ENCODE measurements at regions of chr12 and their contacts with region 1.

Region 1: GRCh38 chr12:45388545-45388944 is 172.7 kb downstream of the ANO6 start:
- DNase-seq: peak; percentile 9 to 21
- H3K4me3 ChIP-seq: no peak overlapping the region
- H3K27ac ChIP-seq: no peak overlapping the region
- H3K4me1 ChIP-seq: no peaks in the 10 kb centered on the region
- H3K27me3 ChIP-seq: no peaks in the 10 kb centered on the region
- CTCF ChIP-seq: peak in 4 of 6 experiments; percentile 20 to 56 (median 44)
- POLR2A ChIP-seq: no peak

Region 2: DNA sequence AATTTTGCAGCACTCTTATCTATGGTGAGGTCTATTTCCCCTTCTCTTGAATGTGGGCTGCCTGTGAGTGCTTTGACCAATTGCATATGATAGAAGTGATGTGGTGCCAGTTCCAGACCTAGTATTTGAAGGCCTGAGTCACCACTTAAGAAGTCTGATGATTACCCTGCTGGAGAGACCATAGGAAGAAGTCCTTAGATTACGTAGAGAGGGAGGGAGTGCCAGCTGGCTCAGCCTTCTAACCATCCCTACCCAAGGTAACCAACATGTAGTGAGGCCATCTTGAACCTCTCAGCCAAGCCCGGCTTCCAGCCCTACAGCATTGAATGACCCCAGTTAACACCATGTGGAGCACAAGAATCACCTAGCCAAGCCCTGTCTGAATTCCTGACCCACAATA is 679.4 kb before region 1 on chr12:
- intact Hi-C with region 1: no loop called
- DNase-seq: no peak
- H3K4me3 ChIP-seq: no peak overlapping the region
- H3K27ac ChIP-seq: no peak overlapping the region
- H3K4me1 ChIP-seq: no peaks in the 10 kb centered on the region
- H3K27me3 ChIP-seq: no peaks in the 10 kb centered on the region
- CTCF ChIP-seq: no peak
- POLR2A ChIP-seq: no peak

Region 3: DNA sequence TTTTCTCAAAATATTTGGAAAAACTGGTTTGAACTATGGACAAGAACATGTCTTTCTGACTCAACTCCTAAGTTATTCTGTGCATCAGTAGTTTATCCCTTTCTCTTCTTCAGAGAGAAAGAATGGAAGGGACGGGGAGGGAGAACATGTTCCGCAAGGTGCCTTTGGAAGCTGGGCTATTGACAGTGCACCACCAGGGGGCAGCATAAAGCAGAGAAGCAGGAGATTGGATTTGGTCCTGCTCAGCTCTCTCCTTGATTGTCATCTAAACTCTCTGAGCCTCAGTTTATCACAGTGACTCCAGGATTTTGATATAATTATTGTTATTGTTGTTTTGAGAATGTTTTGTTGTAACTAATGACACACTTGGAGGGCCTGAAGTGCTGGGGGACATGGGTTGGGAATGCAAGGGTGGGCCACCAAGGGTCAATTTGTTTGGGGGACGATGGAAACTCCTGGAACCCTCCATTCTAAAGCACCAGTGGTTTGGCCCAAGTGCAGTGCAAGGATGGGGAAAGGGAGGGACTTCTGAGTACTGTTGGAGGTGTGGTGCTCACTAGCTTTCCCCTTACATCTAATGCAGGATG is 218.0 kb before region 1 on chr12:
- intact Hi-C with region 1: loop called (anchors 5 kb)
- DNase-seq: peak; percentile 75 to 86
- H3K4me3 ChIP-seq: no peak overlapping the region
- H3K27ac ChIP-seq: no peak overlapping the region
- H3K4me1 ChIP-seq: no peaks in the 10 kb centered on the region
- H3K27me3 ChIP-seq: no peaks in the 10 kb centered on the region
- CTCF ChIP-seq: peak; percentile 60 to 85 (median 74)
- POLR2A ChIP-seq: no peak

Region 4: GRCh38 chr12:45601888-45602287 is 213.3 kb after region 1 on chr12:
- intact Hi-C with region 1: no loop called
- DNase-seq: no peak
- H3K4me3 ChIP-seq: no peak overlapping the region
- H3K27ac ChIP-seq: no peak overlapping the region
- H3K4me1 ChIP-seq: no peaks in the 10 kb centered on the region
- H3K27me3 ChIP-seq: no peaks in the 10 kb centered on the region
- CTCF ChIP-seq: no peak
- POLR2A ChIP-seq: no peak

Measured in thyroid gland (tissue), 4 donors.